Activated CD4-positive, alpha-beta memory T cell treated with anti-CD3 and anti-CD28 coated beads for 36 hours (primary cell): ENCODE measurements at regions of chr11 and their contacts with region 1.

Region 1: DNA sequence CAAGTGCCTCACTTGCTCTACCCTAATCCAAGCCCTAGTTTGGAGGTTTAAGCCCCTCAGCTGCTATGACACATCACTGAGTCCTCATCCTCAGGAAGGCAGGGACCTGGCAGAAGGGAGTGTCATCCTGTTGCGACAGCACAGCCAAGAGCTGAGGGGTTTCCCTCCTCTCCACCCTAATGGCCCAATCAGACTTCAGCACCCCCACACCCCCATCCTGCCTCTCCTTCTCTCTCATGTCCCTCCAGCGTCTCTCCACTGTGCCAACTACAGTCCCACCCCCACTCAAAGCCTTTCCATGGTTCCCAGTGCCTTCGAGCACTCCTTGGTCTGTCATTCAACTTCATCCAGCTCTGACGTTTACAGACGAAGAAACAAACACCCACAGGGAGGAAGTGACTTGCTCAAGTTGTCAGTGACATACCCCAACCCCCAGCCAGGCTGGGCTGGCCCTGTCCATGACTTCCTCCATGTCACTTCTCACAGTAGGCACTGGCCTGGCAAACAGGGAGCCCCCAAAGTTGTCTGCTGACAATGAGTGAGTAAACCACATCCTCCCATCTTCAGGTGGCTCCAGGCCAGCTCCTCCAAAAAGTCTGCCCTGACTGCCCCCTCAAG is 15.6 kb downstream of the ARAP1 start:
- DNase-seq: peak; percentile 86
- H3K4me3 Mint-ChIP-seq: peak overlapping the region; percentile 24
- H3K27ac Mint-ChIP-seq: peak overlapping the region; percentile 91
- H3K4me1 Mint-ChIP-seq: peaks cover 51% of the 10 kb centered on the region
- H3K27me3 Mint-ChIP-seq: no peaks in the 10 kb centered on the region

Region 2: GRCh38 chr11:72752088-72752914 is 15.7 kb after region 1 on chr11 and contains the start of gene ARAP1:
- CTCF ChIA-PET with region 1: no interaction called
- POLR2A ChIA-PET with region 1: no interaction called
- intact Hi-C with region 1: loop called (anchors 1 kb)
- DNase-seq: peak; percentile 85
- H3K4me3 Mint-ChIP-seq: peak within 1 kb of the TSS; percentile 94
- H3K27ac Mint-ChIP-seq: peak within 1 kb of the TSS; percentile 87
- H3K4me1 Mint-ChIP-seq: peaks cover 39% of the 10 kb centered on the region
- H3K27me3 Mint-ChIP-seq: no peaks in the 10 kb centered on the region
- total RNA-seq, gene ARAP1: 77.4 to 79.6 TPM